ENCODE measurements at regions of chr2 and their contacts with region 1.

Region 1: DNA sequence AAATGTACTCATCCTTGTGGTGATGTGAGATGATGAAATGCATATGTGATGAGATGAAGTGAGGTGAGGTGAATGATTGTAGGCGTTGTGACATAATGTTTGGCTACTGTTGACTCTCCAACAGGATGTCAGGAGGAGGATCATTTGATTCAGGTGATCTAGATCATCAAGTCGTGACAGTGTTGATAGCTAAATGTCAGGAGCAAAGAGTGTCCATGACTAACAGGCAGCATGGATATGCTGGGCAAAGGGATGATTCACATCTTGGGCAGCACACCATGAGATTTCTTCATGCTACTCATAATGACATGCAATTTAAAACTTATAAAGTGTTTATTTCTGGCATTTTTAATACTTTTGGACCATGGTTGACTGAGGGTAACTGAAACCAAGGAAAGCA is 40.2 kb upstream of the UBXN4 start:
- DNase-seq: no peak
- ATAC-seq: no peak
- H3K4me3 ChIP-seq: no peak overlapping the region
- H3K27ac ChIP-seq: no peak overlapping the region
- H3K4me1 ChIP-seq: no peaks in the 10 kb centered on the region
- H3K27me3 ChIP-seq: no peaks in the 10 kb centered on the region
- CTCF ChIP-seq: no peak

Region 2: DNA sequence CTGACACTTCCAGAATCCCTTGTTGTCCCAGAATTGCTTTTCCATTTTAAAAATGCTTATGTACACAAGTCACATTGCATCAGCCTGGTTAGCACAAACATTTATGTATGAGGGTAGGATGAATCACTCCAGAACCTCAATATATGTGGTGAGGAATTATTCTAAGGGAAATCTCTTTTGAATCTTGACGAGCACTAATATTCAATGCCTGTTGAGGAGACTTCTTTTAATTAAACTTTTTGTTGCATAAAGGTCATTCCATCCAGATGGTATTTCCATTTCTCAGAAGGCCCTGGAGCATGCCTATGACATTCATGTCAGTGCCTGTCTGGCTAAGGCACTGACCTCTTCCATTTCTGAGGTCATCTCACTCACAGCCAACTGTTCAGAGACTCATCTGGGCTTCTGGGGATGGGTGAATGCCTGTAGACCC is 834.9 kb before region 1 on chr2:
- CTCF ChIA-PET with region 1: no interaction called
- POLR2A ChIA-PET with region 1: no interaction called
- in situ Hi-C with region 1: no loop called
- intact Hi-C with region 1: no loop called
- DNase-seq: peak; percentile 7
- ATAC-seq: no peak
- H3K4me3 ChIP-seq: no peak overlapping the region
- H3K27ac ChIP-seq: no peak overlapping the region
- H3K4me1 ChIP-seq: no peaks in the 10 kb centered on the region
- H3K27me3 ChIP-seq: no peaks in the 10 kb centered on the region
- CTCF ChIP-seq: no peak

Region 3: DNA sequence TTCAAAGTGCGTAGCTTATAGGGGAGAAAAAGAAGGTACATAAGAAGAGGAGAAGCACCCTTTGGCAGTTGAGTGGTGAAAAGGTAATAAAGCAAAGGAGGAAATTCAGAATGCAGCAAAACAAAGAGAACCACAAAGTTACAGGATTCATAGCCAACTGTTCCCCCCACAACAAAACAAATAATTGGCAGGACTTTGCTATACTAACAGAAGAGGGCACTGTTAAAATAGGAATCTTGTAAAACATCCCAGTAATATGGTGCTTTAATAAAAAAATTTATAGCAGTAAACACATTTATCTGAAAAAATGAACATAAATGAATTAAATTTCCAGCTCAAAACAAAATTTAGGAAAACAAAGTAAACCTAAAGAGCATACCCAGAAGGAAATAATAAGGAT is 127.8 kb before region 1 on chr2:
- CTCF ChIA-PET with region 1: no interaction called
- POLR2A ChIA-PET with region 1: interaction called, 17 read pairs
- in situ Hi-C with region 1: no loop called
- intact Hi-C with region 1: no loop called
- DNase-seq: no peak
- ATAC-seq: no peak
- H3K4me3 ChIP-seq: no peak overlapping the region
- H3K27ac ChIP-seq: no peak overlapping the region
- H3K4me1 ChIP-seq: no peaks in the 10 kb centered on the region
- H3K27me3 ChIP-seq: no peaks in the 10 kb centered on the region
- CTCF ChIP-seq: no peak; the same call in 1 of the 2 replicates

Region 4: GRCh38 chr2:135728064-135728743 is 26.8 kb after region 1 on chr2:
- CTCF ChIA-PET with region 1: interaction called, 15 read pairs
- POLR2A ChIA-PET with region 1: no interaction called
- in situ Hi-C with region 1: no loop called
- intact Hi-C with region 1: no loop called
- DNase-seq: no peak
- ATAC-seq: 0 out of 2 replicates have a peak, but pooled peaks have one; percentile 59
- H3K4me3 ChIP-seq: no peak overlapping the region
- H3K27ac ChIP-seq: no peak overlapping the region
- H3K4me1 ChIP-seq: no peaks in the 10 kb centered on the region
- H3K27me3 ChIP-seq: no peaks in the 10 kb centered on the region
- CTCF ChIP-seq: no peak

Region 5: GRCh38 chr2:135762022-135762421 is 60.6 kb after region 1 on chr2:
- CTCF ChIA-PET with region 1: no interaction called
- POLR2A ChIA-PET with region 1: no interaction called
- in situ Hi-C with region 1: no loop called
- intact Hi-C with region 1: no loop called
- DNase-seq: no peak
- ATAC-seq: no peak
- H3K4me3 ChIP-seq: no peak overlapping the region
- H3K27ac ChIP-seq: no peak overlapping the region
- H3K4me1 ChIP-seq: no peaks in the 10 kb centered on the region
- H3K27me3 ChIP-seq: no peaks in the 10 kb centered on the region
- CTCF ChIP-seq: no peak

Region 6: DNA sequence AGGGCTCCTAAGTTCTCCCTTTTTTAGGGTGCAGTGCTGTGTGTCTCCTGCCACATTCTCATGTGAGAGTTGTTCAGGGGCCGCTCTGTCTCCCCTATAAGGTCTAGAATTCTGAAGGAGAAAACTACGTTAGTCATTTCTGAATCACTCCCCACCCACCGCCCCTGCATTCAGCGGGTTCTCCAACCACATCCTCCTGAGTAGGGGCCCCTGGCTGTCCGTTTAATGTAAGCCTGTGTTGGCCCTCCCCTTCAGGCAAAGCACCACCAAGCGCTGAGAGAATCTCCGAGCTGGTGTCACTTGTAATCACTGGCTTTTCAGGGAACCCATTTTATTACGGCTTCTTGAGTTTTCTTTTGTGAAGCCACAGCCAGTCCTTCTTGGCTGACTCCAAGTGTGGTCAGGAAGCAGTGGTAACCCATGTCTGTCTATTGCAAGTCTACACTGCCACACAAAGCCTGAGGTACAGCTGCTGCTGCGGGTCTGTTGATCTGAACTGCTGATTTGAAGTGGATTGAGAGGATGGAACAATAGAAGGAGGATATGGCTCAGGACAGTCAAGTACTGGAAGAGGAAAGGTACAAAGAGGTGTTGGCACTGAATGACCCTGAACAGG is 118.7 kb after region 1 on chr2:
- CTCF ChIA-PET with region 1: no interaction called
- POLR2A ChIA-PET with region 1: no interaction called
- in situ Hi-C with region 1: no loop called
- intact Hi-C with region 1: no loop called
- DNase-seq: no peak
- ATAC-seq: no peak
- H3K4me3 ChIP-seq: no peak overlapping the region
- H3K27ac ChIP-seq: no peak overlapping the region
- H3K4me1 ChIP-seq: no peaks in the 10 kb centered on the region
- H3K27me3 ChIP-seq: no peaks in the 10 kb centered on the region
- CTCF ChIP-seq: no peak